HEK293 (cell line): ENCODE measurements at regions of chr9 and their contacts with region 1.

Region 1: DNA sequence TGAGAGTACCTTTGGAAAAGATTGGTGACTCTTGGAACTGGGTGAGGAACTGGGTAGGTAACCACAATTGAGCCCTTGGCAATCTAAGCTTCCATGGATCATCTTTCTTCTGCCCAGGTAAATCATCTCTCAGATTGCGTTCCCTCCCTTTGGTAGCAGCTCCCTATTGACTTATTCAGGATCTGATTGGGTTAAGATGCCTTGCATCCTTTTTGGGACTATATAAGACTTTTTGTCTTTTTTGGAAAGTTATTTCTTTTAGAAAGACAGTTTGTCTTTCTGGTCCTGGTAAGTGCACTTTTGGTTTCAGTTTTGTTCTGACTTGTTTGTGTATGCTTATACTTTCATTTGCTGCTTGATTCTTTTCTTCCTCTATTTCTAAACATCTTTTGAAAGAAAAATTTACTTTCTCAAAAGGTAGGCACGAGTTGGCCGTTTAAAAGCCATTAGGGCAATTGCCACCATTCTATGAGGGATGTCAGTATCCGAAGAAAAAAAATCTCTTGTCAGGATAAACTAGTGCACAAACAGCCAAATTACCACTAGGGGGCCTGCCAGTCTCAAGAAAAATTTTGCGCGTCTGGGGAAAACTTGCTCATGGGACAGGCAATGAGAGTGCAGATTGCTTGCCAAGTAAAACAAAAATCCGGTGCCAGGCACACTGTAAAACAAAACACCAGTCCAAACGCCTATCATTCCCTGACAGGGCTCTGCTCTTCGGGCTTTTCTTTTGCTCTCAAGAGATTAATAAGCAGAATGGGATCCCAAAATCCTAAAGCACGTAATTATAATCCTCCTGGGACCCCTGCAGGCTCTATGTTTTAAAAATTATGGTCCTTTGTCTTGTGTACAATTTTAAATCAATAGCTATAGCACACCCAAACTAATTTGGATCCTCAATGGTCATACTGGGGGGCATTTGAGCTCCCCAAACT is 12.8 kb downstream of the OR1J1 start:
- H3K4me3 ChIP-seq: no peak overlapping the region; the same call in 1 of the 2 replicates
- H3K27ac ChIP-seq: no peak overlapping the region
- H3K4me1 ChIP-seq: no peaks in the 10 kb centered on the region
- CTCF ChIP-seq: peak; percentile 36; the same call in 1 of the 2 replicates

Region 2: DNA sequence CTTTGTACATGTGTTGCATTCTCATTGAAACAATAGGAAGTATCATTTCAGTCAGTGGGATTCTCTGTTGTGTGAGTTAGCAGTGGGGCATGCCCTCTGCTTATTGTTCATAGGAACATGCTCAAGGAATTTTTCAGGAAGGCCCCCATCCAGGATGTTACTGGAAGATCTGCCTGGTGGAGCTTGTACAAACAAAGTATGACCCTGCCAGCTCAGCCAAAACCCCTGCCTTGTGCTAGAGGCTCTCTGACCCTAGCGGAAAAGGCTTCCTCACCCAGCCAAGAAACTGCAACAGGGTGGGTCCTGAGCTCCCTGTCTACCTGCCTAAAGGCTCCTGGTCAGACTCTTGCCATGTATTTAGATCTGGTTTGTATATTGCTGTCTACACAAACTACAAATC is 157.0 kb before region 1 on chr9:
- CTCF ChIA-PET with region 1: no interaction called
- POLR2A ChIA-PET with region 1: no interaction called
- H3K4me3 ChIP-seq: no peak overlapping the region
- H3K27ac ChIP-seq: no peak overlapping the region
- H3K4me1 ChIP-seq: no peaks in the 10 kb centered on the region
- CTCF ChIP-seq: no peak

Region 3: GRCh38 chr9:122402403-122402871 is 62.5 kb before region 1 on chr9:
- CTCF ChIA-PET with region 1: no interaction called
- POLR2A ChIA-PET with region 1: no interaction called
- H3K4me3 ChIP-seq: no peak overlapping the region
- H3K27ac ChIP-seq: no peak overlapping the region
- H3K4me1 ChIP-seq: no peaks in the 10 kb centered on the region
- CTCF ChIP-seq: no peak

Region 4: DNA sequence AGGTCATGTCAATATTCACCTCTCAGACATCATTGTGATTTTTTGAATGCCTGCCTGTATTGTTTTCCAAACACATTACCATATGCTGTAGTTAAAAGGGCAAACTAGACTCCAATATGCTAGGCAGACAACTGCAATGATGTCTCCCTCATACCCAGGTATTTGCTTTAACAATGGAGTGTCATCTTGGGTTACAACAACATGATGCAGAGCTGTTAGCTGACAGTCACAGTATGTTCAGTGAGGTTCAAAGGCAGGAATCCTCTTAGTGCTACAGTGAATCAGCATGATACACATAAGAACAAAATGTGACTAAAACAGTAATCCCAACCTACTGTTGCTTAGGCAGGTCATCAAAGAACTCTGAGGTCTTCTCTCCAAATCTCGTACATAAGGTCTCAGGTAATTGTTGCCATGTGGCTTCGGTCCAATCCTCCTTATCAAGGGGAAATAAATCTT is 11.2 kb before region 1 on chr9:
- CTCF ChIA-PET with region 1: interaction called, 10 read pairs
- POLR2A ChIA-PET with region 1: no interaction called
- H3K4me3 ChIP-seq: no peak overlapping the region
- H3K27ac ChIP-seq: no peak overlapping the region
- H3K4me1 ChIP-seq: no peaks in the 10 kb centered on the region
- CTCF ChIP-seq: no peak